MCF 10A (cell line): ENCODE measurements at regions of chr14 and their contacts with region 1.

Region 1: GRCh38 chr14:55446218-55446654 is 5.8 kb upstream of the TBPL2 start:
- DNase-seq: peak; percentile 89
- H3K4me3 Mint-ChIP-seq: no peak overlapping the region
- H3K27ac Mint-ChIP-seq: no peak overlapping the region
- H3K4me1 Mint-ChIP-seq: peaks cover 31% of the 10 kb centered on the region
- H3K27me3 Mint-ChIP-seq: no peaks in the 10 kb centered on the region
- CTCF ChIP-seq: peak; percentile 65

Region 2: DNA sequence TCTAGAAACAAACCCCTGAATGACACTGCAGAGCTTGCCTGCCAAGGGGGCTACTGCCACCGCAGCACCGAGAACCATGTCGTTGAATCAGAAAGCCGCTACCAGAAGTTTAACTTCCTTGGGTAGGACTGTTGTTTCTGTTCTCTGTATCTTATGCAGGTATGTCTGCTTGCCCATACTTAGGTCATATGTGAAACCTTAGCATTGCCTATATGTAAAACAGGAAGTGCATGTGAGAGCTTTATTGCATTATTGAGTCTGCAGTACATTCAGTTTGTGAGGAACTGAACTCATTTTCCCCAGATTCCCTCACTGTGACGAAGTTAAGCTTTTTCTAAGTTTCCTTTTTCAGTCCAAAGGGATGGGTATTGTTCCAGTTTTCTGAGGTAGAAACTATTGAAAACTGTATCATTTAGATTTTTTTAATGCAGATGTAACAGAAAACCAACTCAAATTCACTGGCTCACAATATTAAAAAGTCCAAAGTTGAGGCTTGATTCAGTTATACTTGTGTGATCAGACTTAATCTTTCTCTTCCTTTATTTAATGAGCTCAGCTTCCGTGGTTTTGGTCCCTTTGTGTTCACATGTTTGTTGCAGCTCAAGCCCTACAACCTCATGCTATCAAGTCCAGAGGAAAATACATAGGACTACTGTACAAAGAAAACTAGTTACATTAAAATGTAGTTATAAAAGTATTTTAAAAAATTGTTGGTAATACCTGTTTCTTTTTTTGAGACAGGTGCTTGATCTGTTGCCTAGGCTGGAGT is 168.1 kb before region 1 on chr14:
- CTCF ChIA-PET with region 1: no interaction called
- POLR2A ChIA-PET with region 1: no interaction called
- intact Hi-C with region 1: no loop called
- DNase-seq: no peak
- H3K4me3 Mint-ChIP-seq: no peak overlapping the region
- H3K27ac Mint-ChIP-seq: no peak overlapping the region
- H3K4me1 Mint-ChIP-seq: peaks cover 16% of the 10 kb centered on the region
- H3K27me3 Mint-ChIP-seq: no peaks in the 10 kb centered on the region
- CTCF ChIP-seq: no peak

Region 3: GRCh38 chr14:55535516-55536248 is 89.4 kb after region 1 on chr14:
- CTCF ChIA-PET with region 1: interaction called, 11 read pairs
- POLR2A ChIA-PET with region 1: interaction called, 3 read pairs
- intact Hi-C with region 1: no loop called
- DNase-seq: peak; percentile 42
- H3K4me3 Mint-ChIP-seq: no peak overlapping the region
- H3K27ac Mint-ChIP-seq: no peak overlapping the region
- H3K4me1 Mint-ChIP-seq: peaks cover 5% of the 10 kb centered on the region
- H3K27me3 Mint-ChIP-seq: no peaks in the 10 kb centered on the region
- CTCF ChIP-seq: no peak

Region 4: GRCh38 chr14:55588259-55588699 is 142.0 kb after region 1 on chr14:
- CTCF ChIA-PET with region 1: interaction called, 24 read pairs
- POLR2A ChIA-PET with region 1: interaction called, 9 read pairs
- intact Hi-C with region 1: no loop called
- DNase-seq: no peak
- H3K4me3 Mint-ChIP-seq: no peak overlapping the region
- H3K27ac Mint-ChIP-seq: peak overlapping the region; percentile 55
- H3K4me1 Mint-ChIP-seq: peaks cover 51% of the 10 kb centered on the region
- H3K27me3 Mint-ChIP-seq: no peaks in the 10 kb centered on the region
- CTCF ChIP-seq: no peak

Region 5: DNA sequence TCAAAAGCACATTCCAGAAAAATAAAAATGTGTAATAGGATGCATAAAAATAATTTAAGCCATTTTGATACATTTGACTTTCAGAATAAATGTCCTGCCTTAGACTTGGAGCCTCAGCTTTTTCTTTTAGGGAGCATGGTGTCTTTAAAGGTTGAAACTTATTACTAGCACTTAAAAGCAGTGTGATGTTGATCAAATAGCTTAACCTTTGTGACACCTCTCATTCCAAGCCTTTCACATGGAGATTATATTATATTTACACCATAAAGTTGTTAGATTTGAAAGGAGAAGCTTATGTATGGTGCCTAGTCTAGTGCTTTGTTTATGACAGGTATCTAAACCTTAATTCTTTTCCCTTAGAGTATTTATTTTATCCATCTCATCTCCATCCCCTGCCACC is 195.7 kb after region 1 on chr14:
- CTCF ChIA-PET with region 1: interaction called, 15 read pairs
- POLR2A ChIA-PET with region 1: interaction called, 5 read pairs
- intact Hi-C with region 1: no loop called
- DNase-seq: no peak
- H3K4me3 Mint-ChIP-seq: no peak overlapping the region
- H3K27ac Mint-ChIP-seq: no peak overlapping the region
- H3K4me1 Mint-ChIP-seq: peaks cover 6% of the 10 kb centered on the region
- H3K27me3 Mint-ChIP-seq: no peaks in the 10 kb centered on the region
- CTCF ChIP-seq: no peak

Region 6: DNA sequence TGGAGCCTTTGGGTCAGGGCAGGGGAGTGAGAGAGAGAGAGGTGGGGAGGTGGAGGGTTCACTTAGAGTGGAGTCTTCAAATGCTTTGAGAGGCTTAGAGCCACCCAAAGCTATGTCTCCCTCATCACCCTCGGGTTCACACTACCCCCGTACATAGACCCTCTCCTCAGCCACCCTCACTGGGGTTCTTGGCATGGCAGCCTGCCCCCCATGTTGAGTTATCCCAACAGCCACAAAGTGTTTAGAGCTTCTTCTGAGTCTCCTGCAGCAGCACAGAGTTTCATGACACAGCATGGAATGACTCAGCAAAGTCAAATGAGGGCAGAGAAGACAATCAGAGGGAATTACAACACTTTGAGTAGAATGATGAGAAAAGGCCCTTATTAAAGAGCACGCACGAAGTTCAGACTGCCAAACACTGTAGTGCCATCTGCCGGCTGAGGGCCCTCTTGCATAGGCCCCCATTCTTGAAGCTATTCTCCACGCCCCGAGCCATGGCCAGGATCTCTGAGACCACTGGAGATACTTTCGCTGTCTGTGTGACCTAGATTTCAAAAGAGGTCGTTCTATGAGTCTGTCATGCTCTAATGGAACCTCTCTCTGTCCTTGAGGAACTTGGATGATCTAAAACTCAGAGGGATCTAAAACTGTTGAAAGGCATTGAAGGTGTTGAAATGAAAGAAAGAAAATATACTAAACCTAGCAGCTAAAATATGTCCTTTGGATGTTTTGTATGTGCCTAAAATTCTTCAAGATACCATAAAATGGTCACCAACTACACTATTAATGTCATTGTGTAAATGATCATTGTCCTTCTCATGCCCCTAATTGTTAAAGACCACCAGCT is 893.8 kb after region 1 on chr14:
- CTCF ChIA-PET with region 1: no interaction called
- POLR2A ChIA-PET with region 1: no interaction called
- intact Hi-C with region 1: loop called (anchors 5 kb)
- DNase-seq: peak; percentile 91
- H3K4me3 Mint-ChIP-seq: no peak overlapping the region
- H3K27ac Mint-ChIP-seq: no peak overlapping the region
- H3K4me1 Mint-ChIP-seq: peaks cover 9% of the 10 kb centered on the region
- H3K27me3 Mint-ChIP-seq: no peaks in the 10 kb centered on the region
- CTCF ChIP-seq: peak; percentile 45

Region 7: GRCh38 chr14:56491299-56492285 is 1045.4 kb after region 1 on chr14:
- CTCF ChIA-PET with region 1: interaction called, 7 read pairs
- POLR2A ChIA-PET with region 1: no interaction called
- intact Hi-C with region 1: loop called (anchors 2 kb)
- DNase-seq: peak; percentile 49
- H3K4me3 Mint-ChIP-seq: no peak overlapping the region
- H3K27ac Mint-ChIP-seq: no peak overlapping the region
- H3K4me1 Mint-ChIP-seq: peaks cover 13% of the 10 kb centered on the region
- H3K27me3 Mint-ChIP-seq: peaks cover 27% of the 10 kb centered on the region
- CTCF ChIP-seq: peak; percentile 51